MCF 10A (cell line): ENCODE measurements at regions of chr12 and their contacts with region 1.

Region 1: DNA sequence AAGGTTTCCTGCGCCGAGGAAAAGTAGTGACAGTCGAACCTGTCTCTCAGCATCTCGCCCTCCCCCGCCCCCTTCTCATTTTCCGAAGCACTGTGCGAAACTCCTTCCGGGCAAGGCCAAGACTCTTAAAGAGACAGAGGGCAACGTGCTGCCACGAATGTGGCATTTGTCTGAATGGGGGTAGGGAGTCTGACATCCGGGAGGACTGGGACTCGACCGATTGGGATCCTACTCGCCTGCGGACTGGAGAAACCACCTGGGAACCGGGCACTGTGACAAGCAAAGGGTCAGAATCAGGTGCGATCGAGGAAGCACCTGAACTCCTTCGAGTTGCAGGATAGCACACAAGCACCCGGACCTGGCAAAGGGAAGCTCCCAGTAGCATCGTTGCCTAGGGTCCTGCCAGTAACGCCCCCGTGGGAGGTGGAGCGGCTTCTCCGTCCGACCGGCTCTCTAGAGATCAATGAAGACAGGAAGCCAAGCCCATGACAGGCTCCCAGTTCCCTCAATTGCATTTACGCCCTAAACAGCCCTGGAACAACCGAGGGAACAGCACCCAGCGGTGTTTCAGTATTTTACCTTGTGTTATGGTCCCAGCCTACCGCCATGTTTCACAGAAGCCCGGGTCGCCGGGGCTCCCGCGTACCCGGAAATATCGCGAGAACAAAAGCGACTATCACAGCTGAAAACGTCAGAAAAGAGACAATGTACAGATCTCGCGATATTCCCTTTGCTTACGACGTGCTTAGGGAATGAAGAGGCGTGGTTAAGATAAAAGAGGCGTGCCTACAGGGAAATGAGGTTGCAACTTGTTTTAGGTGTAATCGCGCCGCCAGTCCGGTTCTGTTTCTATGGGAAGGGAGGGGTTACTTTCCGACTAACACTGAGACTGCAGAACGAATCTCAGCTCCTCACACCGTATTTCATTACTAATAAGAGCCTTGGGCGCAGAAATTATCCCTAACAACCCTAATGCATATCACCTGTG is at the start of gene ERGIC2:
- DNase-seq: peak; percentile 99
- H3K4me3 Mint-ChIP-seq: peak within 1 kb of the TSS; percentile 80
- H3K27ac Mint-ChIP-seq: peak within 1 kb of the TSS; percentile 91
- H3K4me1 Mint-ChIP-seq: peaks cover 17% of the 10 kb centered on the region
- H3K27me3 Mint-ChIP-seq: no peaks in the 10 kb centered on the region
- CTCF ChIP-seq: no peak
- total RNA-seq, gene ERGIC2: 63.6 and 74.6 TPM in 2 replicates

Region 2: GRCh38 chr12:29398495-29398894 is 17.7 kb after region 1 on chr12:
- CTCF ChIA-PET with region 1: no interaction called
- POLR2A ChIA-PET with region 1: interaction called, 14 read pairs
- intact Hi-C with region 1: no loop called
- DNase-seq: no peak
- H3K4me3 Mint-ChIP-seq: no peak overlapping the region
- H3K27ac Mint-ChIP-seq: peak overlapping the region; percentile 63
- H3K4me1 Mint-ChIP-seq: peaks cover 5% of the 10 kb centered on the region
- H3K27me3 Mint-ChIP-seq: no peaks in the 10 kb centered on the region
- CTCF ChIP-seq: no peak

Region 3: DNA sequence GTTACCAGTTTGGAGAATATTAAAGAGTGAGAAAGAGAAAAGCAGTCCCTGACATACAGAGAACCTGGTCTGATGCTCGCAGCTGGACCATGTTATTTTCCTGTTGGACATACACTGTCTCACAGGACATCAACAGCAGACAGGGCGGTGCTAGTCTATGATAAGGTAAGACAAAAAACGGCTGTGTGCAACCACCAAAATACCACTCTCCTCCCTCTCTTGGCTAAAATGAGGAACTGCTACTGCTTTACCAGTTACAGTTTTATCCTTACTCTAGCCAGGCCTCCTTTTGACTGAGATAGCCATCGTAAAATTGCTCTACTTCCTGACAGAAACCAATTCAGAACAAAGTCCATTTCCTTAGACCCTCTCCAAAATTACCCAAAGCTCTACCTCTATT is 47.1 kb after region 1 on chr12:
- CTCF ChIA-PET with region 1: no interaction called
- POLR2A ChIA-PET with region 1: interaction called, 14 read pairs
- intact Hi-C with region 1: loop called (anchors 2 kb)
- DNase-seq: peak; percentile 9
- H3K4me3 Mint-ChIP-seq: no peak overlapping the region
- H3K27ac Mint-ChIP-seq: peak overlapping the region; percentile 75
- H3K4me1 Mint-ChIP-seq: peaks cover 61% of the 10 kb centered on the region
- H3K27me3 Mint-ChIP-seq: no peaks in the 10 kb centered on the region
- CTCF ChIP-seq: peak; percentile 11